Endothelial cell of umbilical vein (primary cell): ENCODE measurements at regions of chr5 and their contacts with region 1.

Region 1: GRCh38 chr5:59367791-59368394 is 525.6 kb downstream of the PDE4D start:
- DNase-seq: peak; percentile 75
- H3K4me3 ChIP-seq: no peak overlapping the region
- H3K27ac ChIP-seq: no peak overlapping the region
- H3K4me1 ChIP-seq: no peaks in the 10 kb centered on the region
- H3K27me3 ChIP-seq: peaks cover 0 to 2% of the 10 kb centered on the region in 2 experiments
- CTCF ChIP-seq: peak; percentile 75 to 79
- POLR2A ChIP-seq: no peak

Region 2: GRCh38 chr5:59007460-59008063 is 360.3 kb before region 1 on chr5:
- CTCF ChIA-PET with region 1: no interaction called
- POLR2A ChIA-PET with region 1: no interaction called
- dilution Hi-C with region 1: no loop called
- intact Hi-C with region 1: no loop called
- DNase-seq: peak; percentile 27
- H3K4me3 ChIP-seq: no peak overlapping the region
- H3K27ac ChIP-seq: no peak overlapping the region
- H3K4me1 ChIP-seq: no peaks in the 10 kb centered on the region
- H3K27me3 ChIP-seq: peaks cover 0 to 1% of the 10 kb centered on the region in 2 experiments
- CTCF ChIP-seq: peak in 1 of 2 donors; percentile 12
- POLR2A ChIP-seq: no peak

Region 3: DNA sequence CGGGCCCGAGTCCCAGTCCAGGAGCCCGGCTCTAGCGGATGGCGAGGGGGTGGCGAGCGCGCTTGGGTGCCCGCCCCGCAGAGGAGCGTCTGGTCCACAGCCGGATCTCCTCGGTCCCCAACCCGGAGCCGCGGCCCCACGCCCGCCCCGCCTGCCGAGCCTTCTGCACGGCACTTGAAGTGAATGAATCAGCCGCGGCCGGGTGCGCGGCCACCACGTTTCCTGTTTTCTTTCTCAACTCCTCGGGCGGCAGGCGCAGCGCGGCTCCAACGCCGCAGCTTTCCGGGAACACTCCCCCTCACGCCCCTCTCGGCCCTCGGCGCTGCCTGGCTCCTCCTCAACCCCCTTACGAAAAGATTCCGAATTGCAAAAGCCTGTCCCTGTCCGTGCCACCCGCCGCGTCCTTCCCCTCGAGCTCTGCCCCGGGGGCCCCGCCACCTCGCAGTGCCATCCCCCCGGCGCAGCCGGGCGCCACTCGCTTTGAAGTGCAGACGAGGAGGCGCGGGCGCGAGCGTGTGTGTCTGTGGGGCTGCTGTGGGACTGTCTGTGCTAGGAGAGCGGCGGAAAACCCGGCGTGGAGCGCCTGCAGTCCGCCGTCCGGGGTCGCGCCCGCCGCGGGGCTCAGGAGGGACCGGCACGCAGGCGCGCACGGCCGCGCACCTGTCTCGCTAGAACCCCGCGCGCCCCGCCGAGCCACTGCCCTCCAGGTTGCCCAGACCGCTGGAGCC is 328.4 kb before region 1 on chr5:
- CTCF ChIA-PET with region 1: interaction called, 8 read pairs
- POLR2A ChIA-PET with region 1: no interaction called
- dilution Hi-C with region 1: no loop called
- intact Hi-C with region 1: loop called (anchors 5 kb)
- DNase-seq: peak; percentile 77
- H3K4me3 ChIP-seq: peak overlapping the region; percentile 57 to 81 (median 60)
- H3K27ac ChIP-seq: peak overlapping the region; percentile 14
- H3K4me1 ChIP-seq: peaks cover 40% of the 10 kb centered on the region
- H3K27me3 ChIP-seq: no peaks in the 10 kb centered on the region
- CTCF ChIP-seq: no peak
- POLR2A ChIP-seq: no peak

Region 4: DNA sequence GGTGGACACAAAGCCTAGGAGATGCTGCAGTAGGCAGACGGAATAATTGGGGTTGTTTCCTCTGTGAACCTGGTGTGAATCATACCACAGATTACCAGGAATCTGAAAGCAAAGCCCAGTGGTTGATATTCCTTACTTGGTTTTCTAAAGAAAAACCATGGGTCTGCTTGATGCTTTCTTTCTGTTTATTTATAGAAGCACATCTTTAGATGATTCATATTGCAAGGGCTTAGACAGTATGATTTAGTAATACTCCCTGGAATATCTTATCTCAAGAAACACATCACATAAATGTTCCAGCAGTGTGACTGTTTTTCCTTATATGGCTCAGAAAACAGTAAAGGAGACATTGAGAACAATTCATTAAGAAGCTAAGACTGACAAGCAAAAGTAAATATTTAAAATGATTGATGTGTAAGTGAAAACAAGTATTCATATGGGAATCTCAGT is 161.7 kb before region 1 on chr5:
- CTCF ChIA-PET with region 1: interaction called, 11 read pairs
- POLR2A ChIA-PET with region 1: no interaction called
- dilution Hi-C with region 1: no loop called
- intact Hi-C with region 1: no loop called
- DNase-seq: peak; percentile 55
- H3K4me3 ChIP-seq: no peak overlapping the region
- H3K27ac ChIP-seq: no peak overlapping the region
- H3K4me1 ChIP-seq: peaks cover 14% of the 10 kb centered on the region
- H3K27me3 ChIP-seq: no peaks in the 10 kb centered on the region
- CTCF ChIP-seq: no peak
- POLR2A ChIP-seq: no peak

Region 5: GRCh38 chr5:59218424-59219045 is 149.4 kb before region 1 on chr5:
- CTCF ChIA-PET with region 1: interaction called, 64 read pairs
- POLR2A ChIA-PET with region 1: no interaction called
- dilution Hi-C with region 1: no loop called
- intact Hi-C with region 1: loop called (anchors 1 kb)
- DNase-seq: peak; percentile 54
- H3K4me3 ChIP-seq: no peak overlapping the region
- H3K27ac ChIP-seq: no peak overlapping the region
- H3K4me1 ChIP-seq: peaks cover 19% of the 10 kb centered on the region
- H3K27me3 ChIP-seq: no peaks in the 10 kb centered on the region
- CTCF ChIP-seq: peak in 1 of 2 donors; percentile 2
- POLR2A ChIP-seq: no peak

Region 6: DNA sequence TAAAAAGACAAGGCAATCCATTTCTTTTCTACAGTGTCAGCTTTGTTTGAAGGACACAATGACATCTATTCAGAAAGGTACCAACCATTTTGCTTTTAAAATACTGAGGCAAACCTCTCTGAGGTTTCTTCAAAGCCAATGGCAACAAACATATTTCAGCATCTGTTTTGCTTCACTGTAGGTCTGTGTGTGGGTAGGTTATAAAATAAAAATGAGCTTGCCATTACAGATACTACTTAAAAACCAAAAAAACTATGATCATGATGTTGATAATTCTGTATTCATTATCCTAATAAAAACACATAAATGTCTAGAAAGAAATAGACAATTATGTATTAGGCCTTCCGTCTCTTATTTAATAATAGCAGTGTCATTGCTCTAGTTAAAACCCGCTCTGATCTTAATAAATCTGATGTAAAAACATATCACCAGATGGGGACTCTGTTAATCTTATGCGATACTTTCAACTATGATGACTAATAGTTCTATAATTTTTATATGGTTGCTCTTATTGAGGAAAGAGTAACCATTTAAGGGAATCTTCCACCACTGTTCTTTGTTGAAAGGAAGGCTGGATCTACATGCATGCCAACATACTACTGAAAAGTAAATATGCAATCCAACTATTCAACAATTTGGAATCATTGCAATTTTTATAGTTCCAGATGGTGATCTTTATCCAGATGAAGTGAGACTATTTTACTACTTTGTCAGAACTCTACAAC is 121.6 kb before region 1 on chr5:
- CTCF ChIA-PET with region 1: interaction called, 12 read pairs
- POLR2A ChIA-PET with region 1: no interaction called
- dilution Hi-C with region 1: no loop called
- intact Hi-C with region 1: no loop called
- DNase-seq: no peak
- H3K4me3 ChIP-seq: no peak overlapping the region
- H3K27ac ChIP-seq: no peak overlapping the region
- H3K4me1 ChIP-seq: no peaks in the 10 kb centered on the region
- H3K27me3 ChIP-seq: no peaks in the 10 kb centered on the region
- CTCF ChIP-seq: no peak
- POLR2A ChIP-seq: no peak

Region 7: DNA sequence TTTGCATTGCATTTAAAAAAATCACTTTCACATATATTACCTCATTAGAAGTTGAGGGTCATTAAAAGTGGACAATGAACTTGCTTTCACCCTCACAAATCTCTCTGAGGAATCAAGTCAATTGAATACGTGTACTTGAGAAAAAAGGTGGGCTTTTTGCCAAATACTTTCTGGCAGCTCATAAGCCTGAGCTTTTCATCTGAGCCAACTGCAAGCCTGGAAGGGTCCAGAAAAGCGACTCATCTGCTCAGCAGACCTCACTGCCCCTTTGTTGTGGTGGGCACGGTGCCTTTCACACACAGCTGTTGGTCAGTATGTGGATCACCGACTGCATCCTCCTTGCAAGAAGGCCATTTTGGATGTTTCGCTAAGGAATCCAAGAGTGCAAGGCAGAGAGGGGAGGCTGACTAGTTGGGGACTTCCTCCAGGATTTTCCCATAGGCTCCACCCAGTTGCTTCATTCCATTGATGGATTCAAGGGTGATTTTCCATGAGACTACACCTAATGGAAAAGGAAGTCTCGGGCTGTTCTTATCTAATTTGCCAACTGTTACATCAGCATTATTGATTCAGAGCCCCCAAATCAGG is 39.1 kb before region 1 on chr5:
- CTCF ChIA-PET with region 1: interaction called, 15 read pairs
- POLR2A ChIA-PET with region 1: no interaction called
- dilution Hi-C with region 1: no loop called
- intact Hi-C with region 1: no loop called
- DNase-seq: peak; percentile 85
- H3K4me3 ChIP-seq: no peak overlapping the region
- H3K27ac ChIP-seq: no peak overlapping the region
- H3K4me1 ChIP-seq: peaks cover 4% of the 10 kb centered on the region
- H3K27me3 ChIP-seq: peaks cover 3% of the 10 kb centered on the region in 2 experiments
- CTCF ChIP-seq: no peak
- POLR2A ChIP-seq: no peak

Region 8: DNA sequence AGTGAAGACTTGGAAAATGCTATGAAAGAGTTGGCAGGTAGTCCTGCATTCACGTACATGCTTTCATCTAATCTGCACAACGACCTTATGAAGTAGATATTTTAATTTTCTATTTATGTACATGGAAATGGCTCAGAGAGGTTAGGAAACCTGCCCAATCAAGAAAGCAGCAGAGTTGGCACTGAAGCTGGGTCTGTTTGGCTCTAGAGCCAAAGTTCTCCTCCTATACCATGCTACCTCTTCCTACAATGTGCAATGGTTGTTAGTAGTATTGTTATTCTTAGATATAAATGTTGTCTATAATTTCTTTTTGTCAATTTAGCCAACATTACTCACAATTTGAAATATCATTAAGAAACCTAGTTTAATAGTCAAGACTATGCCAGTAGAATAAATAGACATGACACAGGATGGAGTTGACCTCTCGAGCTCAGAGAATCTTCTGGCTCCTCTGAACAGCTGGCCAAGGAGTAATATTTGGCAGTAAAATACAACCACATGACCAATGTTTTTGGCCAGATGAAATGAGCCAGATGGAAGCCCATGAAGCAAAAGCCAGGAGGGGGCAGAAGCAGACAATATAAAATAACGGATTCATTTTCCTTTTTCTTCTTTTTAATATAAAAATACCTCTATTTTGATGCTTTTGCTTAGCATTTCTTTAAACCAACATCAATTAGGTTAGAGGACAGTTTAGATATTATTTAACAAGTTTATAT is 16.7 kb before region 1 on chr5:
- CTCF ChIA-PET with region 1: interaction called, 27 read pairs
- POLR2A ChIA-PET with region 1: no interaction called
- dilution Hi-C with region 1: no loop called
- intact Hi-C with region 1: no loop called
- DNase-seq: no peak
- H3K4me3 ChIP-seq: no peak overlapping the region
- H3K27ac ChIP-seq: no peak overlapping the region
- H3K4me1 ChIP-seq: peaks cover 11% of the 10 kb centered on the region
- H3K27me3 ChIP-seq: no peaks in the 10 kb centered on the region
- CTCF ChIP-seq: no peak
- POLR2A ChIP-seq: no peak

Region 9: DNA sequence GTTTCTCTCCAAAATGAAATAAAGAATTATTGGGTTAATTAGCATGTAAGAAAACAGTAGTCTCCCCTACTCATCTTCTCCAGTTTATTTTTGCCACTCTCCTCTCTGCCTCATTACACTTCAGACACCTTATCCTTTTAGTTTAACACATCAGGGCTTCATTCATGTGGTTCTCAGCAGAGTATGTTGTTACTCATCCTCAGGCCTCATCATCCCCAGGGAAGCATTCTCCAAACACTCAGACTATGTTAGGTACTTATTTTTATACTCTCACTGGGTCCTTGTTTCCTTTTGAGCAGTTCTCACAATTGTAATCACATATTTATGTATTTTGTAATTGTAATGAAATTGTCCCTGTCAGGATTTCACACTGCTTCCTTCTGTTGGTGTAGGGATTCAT is 55.1 kb after region 1 on chr5:
- CTCF ChIA-PET with region 1: no interaction called
- POLR2A ChIA-PET with region 1: no interaction called
- dilution Hi-C with region 1: no loop called
- intact Hi-C with region 1: no loop called
- DNase-seq: no peak
- H3K4me3 ChIP-seq: no peak overlapping the region
- H3K27ac ChIP-seq: no peak overlapping the region
- H3K4me1 ChIP-seq: no peaks in the 10 kb centered on the region
- H3K27me3 ChIP-seq: no peaks in the 10 kb centered on the region
- CTCF ChIP-seq: no peak
- POLR2A ChIP-seq: no peak